ENCODE measurements at regions of chr4 and their contacts with region 1.

Region 1: GRCh38 chr4:180828440-180829018 is 1414.7 kb upstream of the TENM3 start:
- DNase-seq: peak in 26 of 42 donors; percentile 11 to 85 (median 52)

Region 2: DNA sequence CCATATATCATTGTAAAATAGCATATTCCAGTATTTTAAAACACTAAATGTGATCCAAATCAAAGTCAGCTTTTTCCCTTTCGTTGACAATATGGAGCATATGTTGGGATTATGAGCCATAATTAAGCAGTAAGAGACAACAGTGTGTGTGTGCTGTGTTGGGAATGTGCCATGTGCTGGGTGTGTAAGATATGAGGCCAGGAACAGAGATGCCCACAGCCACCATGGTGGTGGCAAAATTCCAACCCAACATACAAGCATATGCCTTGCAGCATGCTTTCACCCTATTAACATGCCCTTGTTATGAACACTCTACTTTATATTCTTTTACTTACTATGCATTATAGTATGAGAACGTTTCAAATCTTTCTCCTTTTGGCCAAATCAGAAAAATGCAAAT is 145.8 kb before region 1 on chr4:
- intact Hi-C with region 1: no loop called
- DNase-seq: no peak

Region 3: GRCh38 chr4:180960743-180961401 is 132.3 kb after region 1 on chr4:
- intact Hi-C with region 1: loop called (anchors 10 kb)
- DNase-seq: peak in 14 of 42 donors; percentile 10 to 64 (median 22)

Region 4: GRCh38 chr4:180993244-180993836 is 164.8 kb after region 1 on chr4:
- intact Hi-C with region 1: no loop called
- DNase-seq: no peak